ENCODE measurements at regions of chr3 and their contacts with region 1.

Region 1: DNA sequence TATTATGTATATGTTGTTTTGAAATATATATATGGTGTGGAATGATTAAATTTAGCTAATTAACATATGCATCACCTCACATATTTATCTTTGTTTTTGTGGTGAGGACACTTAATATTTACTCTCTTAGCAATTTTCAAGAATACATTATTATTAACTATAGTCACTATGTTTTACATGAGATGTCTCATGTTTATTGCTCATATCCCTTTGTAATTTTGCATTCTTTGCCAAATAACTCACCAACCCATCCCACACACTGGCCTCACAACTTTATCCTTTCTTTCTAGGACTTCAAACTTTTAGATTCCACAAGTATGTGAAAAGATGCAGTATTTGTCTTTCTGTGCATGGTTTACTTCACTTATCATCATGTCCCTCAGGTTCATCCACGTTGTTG is 950.2 kb upstream of the CADM2 start:
- DNase-seq: peak; percentile 50
- H3K4me3 ChIP-seq: no peak overlapping the region
- H3K27ac ChIP-seq: no peak overlapping the region
- H3K4me1 ChIP-seq: no peaks in the 10 kb centered on the region
- H3K27me3 ChIP-seq: no peaks in the 10 kb centered on the region
- CTCF ChIP-seq: no peak

Region 2: DNA sequence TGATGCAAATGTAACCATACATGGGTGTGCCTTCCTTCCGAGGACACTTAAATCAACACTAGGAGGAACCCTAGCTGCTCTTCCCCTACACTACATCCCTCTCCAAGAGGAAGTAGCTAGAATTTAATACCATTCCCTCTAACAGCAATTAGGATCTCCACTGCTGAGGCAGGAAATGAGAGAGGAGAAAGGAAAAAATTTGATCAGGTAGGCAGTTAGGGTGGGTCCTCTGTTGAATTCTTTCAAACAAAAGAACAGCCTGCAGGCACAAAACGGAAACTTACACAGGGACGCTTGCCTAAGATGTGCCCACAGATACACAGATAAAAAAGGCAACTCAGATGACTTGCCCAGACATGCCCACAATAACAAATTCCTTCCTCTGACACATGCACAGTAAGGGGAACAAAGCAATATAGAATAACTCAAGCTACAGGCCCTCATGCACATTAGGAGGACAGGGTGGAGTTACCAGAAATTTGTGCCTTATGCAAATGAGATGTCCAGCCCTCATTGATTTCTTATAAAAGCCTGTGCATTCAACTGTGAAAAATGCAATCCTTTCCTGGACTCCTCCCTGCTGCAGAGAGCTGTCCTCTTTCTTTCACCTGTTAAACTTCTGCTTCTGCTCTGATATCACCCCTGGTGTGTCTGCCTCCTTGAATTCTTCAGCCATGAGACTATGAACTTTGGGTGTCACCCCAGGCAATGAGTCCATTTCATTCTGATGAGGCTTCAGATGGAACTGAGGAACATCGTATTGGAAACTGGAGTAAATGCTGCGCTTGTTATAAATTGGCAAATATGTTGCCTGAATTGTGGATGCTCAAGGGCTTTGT is 74.1 kb before region 1 on chr3:
- CTCF ChIA-PET with region 1: no interaction called
- dilution Hi-C with region 1: no loop called
- in situ Hi-C with region 1: no loop called
- intact Hi-C with region 1: loop called (anchors 2 kb)
- DNase-seq: peak; percentile 99
- H3K4me3 ChIP-seq: no peak overlapping the region
- H3K27ac ChIP-seq: peak overlapping the region; percentile 97
- H3K4me1 ChIP-seq: peaks cover 29% of the 10 kb centered on the region
- H3K27me3 ChIP-seq: no peaks in the 10 kb centered on the region
- CTCF ChIP-seq: peak; percentile 7 to 9

Measured in mammary epithelial cell (primary cell).